Activated CD8-positive, alpha-beta T cell treated with anti-CD3 and anti-CD28 coated beads, Interleukin-2, amount 10 ng/mL, durations not matched to agents 7 days and 5 days (primary cell): ENCODE measurements at regions of chr7 and their contacts with region 1.

Region 1: DNA sequence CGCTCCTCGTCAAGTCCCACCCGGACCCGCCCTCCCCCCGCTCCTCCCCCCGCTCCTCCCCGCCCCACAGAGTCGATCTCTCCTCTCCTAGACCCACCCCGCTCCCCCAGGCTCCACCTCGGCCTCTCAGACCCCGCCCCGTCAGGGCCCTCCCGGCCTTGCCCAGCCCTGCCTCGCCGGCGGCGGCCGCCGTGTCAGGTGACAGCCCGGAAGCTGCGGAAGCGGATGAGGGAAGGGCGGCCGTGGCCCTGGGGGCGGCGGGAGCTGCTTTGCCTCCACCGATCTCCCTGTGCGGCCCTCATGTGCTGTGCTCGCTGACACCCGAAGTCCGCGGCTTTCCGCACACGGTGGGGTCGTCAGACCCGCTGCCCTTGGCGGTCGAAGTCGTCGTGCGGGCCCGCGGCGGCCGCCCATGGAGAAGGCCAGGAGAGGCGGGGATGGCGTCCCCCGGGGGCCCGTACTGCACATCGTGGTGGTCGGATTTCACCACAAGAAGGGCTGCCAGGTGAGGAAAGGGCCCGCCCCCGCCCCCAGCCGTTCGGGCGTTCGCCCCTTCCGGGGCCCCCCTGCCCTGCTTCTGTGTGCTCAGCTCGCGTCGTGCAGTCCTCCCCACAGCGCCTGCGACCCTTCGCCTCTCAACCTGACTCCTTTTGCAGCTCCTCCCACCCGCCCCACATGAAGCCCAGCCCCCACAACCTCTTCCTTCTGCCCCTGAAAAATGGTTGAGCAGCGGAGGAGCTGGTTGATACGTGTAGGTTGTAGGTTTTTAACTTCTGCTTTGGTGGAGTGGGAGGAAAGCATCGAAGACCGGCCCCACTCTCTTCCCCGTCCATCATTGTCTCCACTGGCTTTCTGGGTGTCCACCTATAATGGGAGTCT is at the start of gene AVL9:
- DNase-seq: peak; percentile 99
- ATAC-seq: peak; percentile 94
- H3K4me3 Mint-ChIP-seq: peak within 1 kb of the TSS; percentile 81
- H3K27ac Mint-ChIP-seq: peak within 1 kb of the TSS; percentile 99
- H3K4me1 Mint-ChIP-seq: peaks cover 44% of the 10 kb centered on the region
- H3K27me3 Mint-ChIP-seq: no peaks in the 10 kb centered on the region
- total RNA-seq, gene AVL9: 29.6 to 30.1 TPM

Region 2: DNA sequence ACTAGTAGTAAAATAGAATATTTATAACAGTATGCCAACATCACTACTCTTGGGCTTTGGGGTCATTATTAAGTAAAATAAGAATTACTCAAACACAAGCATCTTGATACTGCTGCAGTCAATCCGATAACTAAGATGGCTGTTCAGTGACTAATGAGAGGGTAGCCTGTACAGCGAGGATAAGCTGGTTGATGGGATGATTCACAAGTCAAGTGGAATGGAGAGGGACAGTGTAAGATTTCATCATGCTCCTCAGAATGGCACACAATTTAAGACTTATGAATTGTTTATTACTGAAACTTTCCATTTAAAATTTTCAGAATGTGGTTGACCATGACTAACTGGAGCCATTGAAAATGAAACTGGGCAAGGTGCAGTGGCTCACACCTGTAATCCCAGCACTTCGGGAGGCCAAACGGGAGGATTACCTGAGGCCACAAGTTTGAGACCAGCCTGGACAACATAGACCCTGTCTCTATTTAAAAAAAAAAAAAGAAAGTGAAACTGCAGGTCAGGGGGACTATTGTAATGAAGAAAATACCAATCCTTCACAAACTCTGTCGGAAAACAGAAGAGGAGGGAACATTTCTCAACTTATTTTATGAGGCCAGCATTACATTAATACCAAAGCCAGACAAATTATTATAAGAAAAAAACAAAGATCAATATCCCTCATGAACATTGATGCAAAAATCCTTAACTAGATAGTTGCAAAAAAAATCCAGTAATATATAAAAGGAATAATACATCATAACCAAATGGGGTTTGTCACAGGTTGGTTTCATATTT is 10.9 kb after region 1 on chr7:
- CTCF ChIA-PET with region 1: interaction called, 7 read pairs
- POLR2A ChIA-PET with region 1: interaction called, 10 read pairs
- DNase-seq: peak; percentile 24
- ATAC-seq: peak; percentile 72
- H3K4me3 Mint-ChIP-seq: peak overlapping the region; percentile 42
- H3K27ac Mint-ChIP-seq: peak overlapping the region; percentile 40
- H3K4me1 Mint-ChIP-seq: peaks cover 25% of the 10 kb centered on the region
- H3K27me3 Mint-ChIP-seq: no peaks in the 10 kb centered on the region

Region 3: GRCh38 chr7:32588657-32589056 is 93.1 kb after region 1 on chr7:
- CTCF ChIA-PET with region 1: no interaction called
- POLR2A ChIA-PET with region 1: interaction called, 10 read pairs
- DNase-seq: no peak
- ATAC-seq: peak; percentile 36
- H3K4me3 Mint-ChIP-seq: no peak overlapping the region
- H3K27ac Mint-ChIP-seq: peak overlapping the region; percentile 52
- H3K4me1 Mint-ChIP-seq: peaks cover 19% of the 10 kb centered on the region
- H3K27me3 Mint-ChIP-seq: no peaks in the 10 kb centered on the region

Region 4: DNA sequence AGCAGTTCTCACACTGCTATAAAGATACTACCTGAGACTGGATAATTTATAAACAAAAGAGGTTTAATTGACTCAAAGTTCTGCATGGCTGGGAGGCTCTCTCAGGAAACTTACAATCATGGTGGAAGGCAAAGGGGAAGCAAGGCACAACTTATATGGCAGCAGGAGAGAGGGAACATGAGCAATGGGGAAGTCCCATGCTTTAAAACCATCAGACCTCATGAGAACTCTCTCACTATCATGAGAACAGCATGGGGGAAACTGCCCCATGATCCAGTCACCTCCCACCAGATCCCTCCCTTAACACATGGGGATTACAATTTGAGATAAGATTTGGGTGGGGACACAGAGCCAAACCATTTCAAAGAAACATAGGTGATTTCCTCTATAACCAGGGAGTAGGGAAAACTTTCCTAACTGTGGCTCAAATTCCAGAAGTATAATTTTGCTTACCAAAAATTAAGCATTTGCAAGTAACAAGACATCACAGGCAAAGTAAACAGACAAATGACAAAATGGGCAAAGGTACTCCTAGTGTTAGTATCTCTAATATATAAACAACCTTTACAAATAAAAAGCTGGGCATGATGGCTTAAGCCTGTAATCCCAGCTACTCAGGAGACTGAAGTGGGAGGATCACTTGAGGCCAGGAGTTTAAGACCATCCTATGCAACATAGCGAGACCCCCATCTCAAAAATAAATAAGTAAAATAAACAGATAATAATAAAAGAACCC is 308.0 kb after region 1 on chr7:
- CTCF ChIA-PET with region 1: no interaction called
- POLR2A ChIA-PET with region 1: no interaction called
- DNase-seq: no peak
- ATAC-seq: no peak
- H3K4me3 Mint-ChIP-seq: no peak overlapping the region
- H3K27ac Mint-ChIP-seq: no peak overlapping the region
- H3K4me1 Mint-ChIP-seq: no peaks in the 10 kb centered on the region
- H3K27me3 Mint-ChIP-seq: no peaks in the 10 kb centered on the region